B cell (primary cell): ENCODE measurements at regions of chr19 and their contacts with region 1.

Region 1: DNA sequence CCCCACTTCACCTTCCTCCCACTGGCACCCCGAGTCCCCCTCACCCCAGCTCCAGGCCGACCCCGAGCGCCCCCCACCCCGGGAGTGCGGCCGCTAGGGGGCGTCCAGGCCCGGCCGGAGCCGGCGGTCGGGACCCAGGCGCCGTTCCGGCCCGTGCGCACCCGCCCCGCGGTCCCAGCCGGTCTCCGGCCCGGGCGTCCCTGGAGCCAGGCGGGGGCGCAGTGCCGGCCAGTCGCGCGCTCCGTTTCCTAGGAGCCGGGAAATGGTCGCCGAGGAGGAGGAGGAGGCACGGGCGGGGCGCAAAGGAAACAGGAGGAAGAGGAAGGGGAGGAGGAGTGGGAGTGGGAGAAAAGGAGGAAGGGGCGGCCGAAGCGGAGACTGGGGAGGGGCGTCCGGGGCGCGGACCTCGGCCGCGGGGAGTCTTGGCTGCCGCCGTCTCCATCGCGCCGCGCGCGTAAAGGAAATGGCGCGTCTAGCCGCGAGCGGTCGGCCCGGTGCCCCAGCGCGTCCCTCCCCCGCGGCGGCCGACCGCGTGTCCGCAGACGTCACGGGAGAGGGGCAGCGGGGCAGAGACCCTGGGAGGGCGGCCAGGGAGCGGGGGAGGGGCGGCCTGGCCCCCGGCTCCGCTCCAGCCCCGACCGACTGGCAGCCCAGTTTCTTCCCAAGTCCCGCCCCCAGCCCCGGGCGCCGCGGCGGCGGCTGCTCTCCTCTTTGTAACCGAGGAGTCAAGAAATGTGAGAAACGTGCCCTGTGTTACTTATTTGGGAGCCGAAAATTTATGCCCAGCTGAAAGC is 1.1 kb upstream of the KCTD15 start:
- DNase-seq: peak; percentile 62
- ATAC-seq: peak; percentile 74
- H3K4me3 ChIP-seq: peak overlapping the region; percentile 23 to 65 (median 55)
- H3K4me3 Mint-ChIP-seq: peak overlapping the region; percentile 81
- H3K27ac ChIP-seq: no peak overlapping the region
- H3K27ac Mint-ChIP-seq: no peak overlapping the region
- H3K4me1 ChIP-seq: peaks cover 13 to 14% of the 10 kb centered on the region in 2 donors
- H3K4me1 Mint-ChIP-seq: peaks cover 9% of the 10 kb centered on the region
- H3K27me3 ChIP-seq: peaks cover 0 to 42% (median 17%) of the 10 kb centered on the region in 4 experiments
- H3K27me3 Mint-ChIP-seq: peaks cover 21% of the 10 kb centered on the region
- CTCF ChIP-seq: peak; percentile 75

Region 2: GRCh38 chr19:33734913-33735312 is 60.7 kb before region 1 on chr19:
- CTCF ChIA-PET with region 1: no interaction called
- POLR2A ChIA-PET with region 1: no interaction called
- intact Hi-C with region 1: no loop called
- DNase-seq: no peak
- ATAC-seq: no peak
- H3K4me3 ChIP-seq: no peak overlapping the region
- H3K4me3 Mint-ChIP-seq: no peak overlapping the region
- H3K27ac ChIP-seq: no peak overlapping the region
- H3K27ac Mint-ChIP-seq: no peak overlapping the region
- H3K4me1 ChIP-seq: no peaks in the 10 kb centered on the region
- H3K4me1 Mint-ChIP-seq: no peaks in the 10 kb centered on the region
- H3K27me3 ChIP-seq: peaks cover 0 to 2% (median 0%) of the 10 kb centered on the region in 4 experiments
- H3K27me3 Mint-ChIP-seq: peaks cover 3% of the 10 kb centered on the region
- CTCF ChIP-seq: no peak

Region 3: DNA sequence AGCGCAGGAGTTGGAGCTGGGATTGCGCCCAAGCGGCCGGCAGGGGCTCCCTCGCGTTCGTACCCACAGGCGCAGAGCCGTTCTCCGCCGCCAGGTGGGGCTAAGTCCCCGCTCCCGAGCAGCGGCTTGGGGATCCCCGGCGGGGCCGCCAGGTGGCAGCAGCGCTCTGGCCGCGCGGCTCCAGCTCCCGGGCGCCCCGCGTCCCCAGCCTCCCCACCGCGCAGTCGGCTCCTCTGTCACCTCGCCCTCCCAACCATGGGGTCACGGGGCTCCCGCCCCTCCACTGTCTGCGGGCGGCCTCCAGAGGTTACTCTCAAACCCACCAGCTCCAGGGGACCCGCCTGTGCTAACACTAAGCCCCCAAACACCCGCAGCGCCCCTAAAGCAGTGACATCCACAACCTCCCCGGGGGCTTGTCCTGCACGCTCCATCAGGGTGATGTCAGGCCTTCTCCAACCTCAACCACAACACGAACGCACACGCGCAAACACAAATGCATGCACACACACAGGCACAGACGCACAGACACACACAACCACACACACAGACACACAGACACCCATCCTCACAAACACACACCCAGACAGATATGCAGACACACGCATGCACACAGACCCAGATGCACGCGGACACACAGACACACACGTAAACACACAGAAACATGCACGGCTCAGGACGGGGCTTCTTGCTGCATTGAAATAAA is 17.3 kb before region 1 on chr19:
- CTCF ChIA-PET with region 1: interaction called, 12 read pairs
- POLR2A ChIA-PET with region 1: no interaction called
- intact Hi-C with region 1: no loop called
- DNase-seq: peak; percentile 87
- ATAC-seq: peak; percentile 100
- H3K4me3 ChIP-seq: no peak overlapping the region
- H3K4me3 Mint-ChIP-seq: no peak overlapping the region
- H3K27ac ChIP-seq: no peak overlapping the region
- H3K27ac Mint-ChIP-seq: no peak overlapping the region
- H3K4me1 ChIP-seq: peaks cover 3 to 4% of the 10 kb centered on the region in 2 donors
- H3K4me1 Mint-ChIP-seq: peaks cover 7% of the 10 kb centered on the region
- H3K27me3 ChIP-seq: peaks cover 0 to 27% (median 2%) of the 10 kb centered on the region in 4 experiments
- H3K27me3 Mint-ChIP-seq: peaks cover 50% of the 10 kb centered on the region
- CTCF ChIP-seq: peak; percentile 100

Region 4: GRCh38 chr19:33819880-33820781 is 24.6 kb after region 1 on chr19:
- CTCF ChIA-PET with region 1: interaction called, 10 read pairs
- POLR2A ChIA-PET with region 1: no interaction called
- intact Hi-C with region 1: no loop called
- DNase-seq: peak; percentile 72
- ATAC-seq: peak; percentile 76
- H3K4me3 ChIP-seq: peak overlapping the region; percentile 36 to 60 (median 54)
- H3K4me3 Mint-ChIP-seq: peak overlapping the region; percentile 92
- H3K27ac ChIP-seq: peak overlapping the region; percentile 54 to 58
- H3K27ac Mint-ChIP-seq: peak overlapping the region; percentile 76
- H3K4me1 ChIP-seq: peaks cover 21 to 27% of the 10 kb centered on the region in 2 donors
- H3K4me1 Mint-ChIP-seq: peaks cover 29% of the 10 kb centered on the region
- H3K27me3 ChIP-seq: peaks cover 0 to 4% (median 0%) of the 10 kb centered on the region in 4 experiments
- H3K27me3 Mint-ChIP-seq: no peaks in the 10 kb centered on the region
- CTCF ChIP-seq: no peak

Region 5: GRCh38 chr19:33927789-33928457 is 132.4 kb after region 1 on chr19:
- CTCF ChIA-PET with region 1: no interaction called
- POLR2A ChIA-PET with region 1: no interaction called
- intact Hi-C with region 1: no loop called
- DNase-seq: no peak
- ATAC-seq: no peak
- H3K4me3 ChIP-seq: no peak overlapping the region
- H3K4me3 Mint-ChIP-seq: no peak overlapping the region
- H3K27ac ChIP-seq: no peak overlapping the region
- H3K27ac Mint-ChIP-seq: no peak overlapping the region
- H3K4me1 ChIP-seq: no peaks in the 10 kb centered on the region
- H3K4me1 Mint-ChIP-seq: no peaks in the 10 kb centered on the region
- H3K27me3 ChIP-seq: no peaks in the 10 kb centered on the region
- H3K27me3 Mint-ChIP-seq: peaks cover 15% of the 10 kb centered on the region
- CTCF ChIP-seq: no peak

Region 6: DNA sequence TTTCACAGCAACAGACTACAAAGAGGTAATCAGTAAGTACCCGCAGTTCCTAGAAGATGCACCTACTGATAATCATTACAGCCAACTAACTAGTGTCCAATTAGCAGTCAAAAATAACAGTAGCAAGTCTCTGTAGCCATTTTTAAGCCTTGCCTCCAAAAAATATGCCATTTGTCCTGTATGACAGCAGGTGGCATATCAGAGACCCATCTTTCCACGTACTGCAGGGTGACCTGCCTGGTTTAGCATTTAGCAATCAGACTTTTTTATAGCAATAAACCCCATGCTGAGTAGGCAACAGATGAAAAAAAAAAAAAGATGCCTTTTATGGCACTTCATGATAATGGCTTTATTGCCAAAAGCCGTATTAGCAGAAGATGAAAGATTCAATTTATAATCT is 221.5 kb after region 1 on chr19:
- CTCF ChIA-PET with region 1: no interaction called
- POLR2A ChIA-PET with region 1: no interaction called
- intact Hi-C with region 1: no loop called
- DNase-seq: no peak
- ATAC-seq: no peak
- H3K4me3 ChIP-seq: no peak overlapping the region
- H3K4me3 Mint-ChIP-seq: no peak overlapping the region
- H3K27ac ChIP-seq: no peak overlapping the region
- H3K27ac Mint-ChIP-seq: no peak overlapping the region
- H3K4me1 ChIP-seq: no peaks in the 10 kb centered on the region
- H3K4me1 Mint-ChIP-seq: no peaks in the 10 kb centered on the region
- H3K27me3 ChIP-seq: peaks cover 0 to 6% (median 0%) of the 10 kb centered on the region in 4 experiments
- H3K27me3 Mint-ChIP-seq: peaks cover 51% of the 10 kb centered on the region
- CTCF ChIP-seq: no peak

Region 7: DNA sequence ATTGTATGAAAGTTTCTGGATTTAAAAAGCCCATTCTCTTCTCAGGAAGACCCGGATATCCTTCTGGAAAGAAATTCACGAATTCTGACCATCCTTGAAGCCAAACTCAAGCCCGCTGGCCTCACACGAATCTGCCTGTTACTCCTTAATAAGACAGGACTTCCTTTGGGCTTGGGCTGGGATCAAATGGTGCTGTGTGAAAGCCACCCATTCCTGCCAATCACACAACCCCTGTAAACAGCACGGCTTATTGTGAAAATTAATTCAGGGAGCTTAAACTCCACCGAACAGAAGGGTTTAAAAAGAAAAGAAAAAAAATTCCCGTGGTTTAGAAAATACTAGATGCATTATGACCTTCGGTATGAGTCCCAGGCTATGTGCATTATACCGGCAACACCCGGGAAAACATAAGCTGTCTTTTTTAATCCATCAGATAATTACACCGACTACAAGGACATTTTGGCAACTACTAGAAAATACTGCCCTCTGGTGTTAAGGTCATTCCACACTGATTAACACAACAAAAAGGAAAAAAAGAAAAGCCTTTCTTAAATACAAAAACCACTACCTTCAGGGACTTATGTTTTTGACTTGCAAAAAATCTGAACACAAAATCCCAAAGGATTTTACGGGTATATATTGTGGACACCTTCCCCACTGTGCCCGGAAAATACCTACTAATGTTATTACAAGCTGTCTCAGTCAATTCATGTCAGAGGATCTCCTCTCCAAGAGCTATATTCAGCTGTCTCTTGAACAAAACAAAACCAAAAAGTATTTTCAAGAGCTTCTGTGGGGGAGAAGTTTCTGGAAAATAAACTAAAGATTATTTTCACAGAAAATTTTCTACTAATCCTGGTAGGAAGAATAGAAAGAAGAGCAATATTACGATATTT is 300.7 kb after region 1 on chr19:
- CTCF ChIA-PET with region 1: interaction called, 10 read pairs
- POLR2A ChIA-PET with region 1: no interaction called
- intact Hi-C with region 1: loop called (anchors 5 kb)
- DNase-seq: peak; percentile 51
- ATAC-seq: no peak
- H3K4me3 ChIP-seq: no peak overlapping the region
- H3K4me3 Mint-ChIP-seq: no peak overlapping the region
- H3K27ac ChIP-seq: no peak overlapping the region
- H3K27ac Mint-ChIP-seq: no peak overlapping the region
- H3K4me1 ChIP-seq: no peaks in the 10 kb centered on the region
- H3K4me1 Mint-ChIP-seq: peaks cover 2% of the 10 kb centered on the region
- H3K27me3 ChIP-seq: peaks cover 0 to 11% (median 0%) of the 10 kb centered on the region in 4 experiments
- H3K27me3 Mint-ChIP-seq: peaks cover 28% of the 10 kb centered on the region
- CTCF ChIP-seq: peak; percentile 69